ENCODE measurements at regions of chr12 and their contacts with region 1.

Region 1: DNA sequence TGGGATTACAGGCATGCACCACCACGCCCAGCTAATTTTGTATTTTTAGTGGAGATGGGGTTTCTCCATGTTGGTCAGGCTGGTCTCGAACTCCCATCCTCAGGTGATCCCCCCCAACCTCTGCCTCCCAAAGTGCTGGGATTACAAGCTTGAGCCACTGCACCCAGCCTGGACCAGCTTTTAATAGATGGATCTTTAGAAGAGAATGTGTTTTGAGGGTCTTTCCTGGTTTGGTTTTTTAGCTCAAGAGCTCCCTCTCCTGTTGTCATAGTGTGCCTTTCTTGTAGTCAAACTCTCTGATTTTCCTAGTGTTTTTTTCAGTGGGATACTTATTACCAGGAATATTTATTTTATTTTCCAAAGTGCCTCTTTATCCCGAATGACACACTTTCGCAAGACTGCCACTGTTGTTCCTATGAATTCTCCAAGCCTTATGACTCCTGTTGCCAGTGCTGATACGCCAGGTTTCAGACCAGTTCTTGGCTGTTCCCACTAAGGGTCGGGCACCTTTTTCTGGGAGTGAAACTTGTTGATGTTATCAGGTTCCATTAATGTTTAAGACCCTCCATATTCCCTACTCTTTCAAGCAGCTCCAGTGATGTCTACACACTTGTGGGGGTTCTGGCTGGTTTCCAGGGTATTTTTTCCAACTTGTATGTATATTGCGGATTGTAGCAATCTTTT is 31.5 kb upstream of the LIMA1 start:
- DNase-seq: no peak
- ATAC-seq: peak; percentile 63
- H3K4me3 ChIP-seq: no peak overlapping the region
- H3K27ac ChIP-seq: no peak overlapping the region
- H3K4me1 ChIP-seq: peaks cover 17 to 37% of the 10 kb centered on the region in 2 experiments
- H3K27me3 ChIP-seq: no peaks in the 10 kb centered on the region
- CTCF ChIP-seq: peak; percentile 73 to 90 (median 75)
- POLR2A ChIP-seq: no peak
- RAD21 ChIP-seq: peak; percentile 95

Region 2: GRCh38 chr12:50084775-50085614 is 229.8 kb before region 1 on chr12 and contains the start of gene SMARCD1:
- CTCF ChIA-PET with region 1: interaction called, 3 read pairs
- POLR2A ChIA-PET with region 1: interaction called, 3 read pairs
- RAD21 ChIA-PET with region 1: no interaction called
- intact Hi-C with region 1: loop called (anchors 5 kb)
- DNase-seq: peak; percentile 81
- ATAC-seq: peak; percentile 89
- H3K4me3 ChIP-seq: peak within 1 kb of the TSS; percentile 70 to 77
- H3K27ac ChIP-seq: peak within 1 kb of the TSS; percentile 59
- H3K4me1 ChIP-seq: peaks cover 5 to 21% of the 10 kb centered on the region in 2 experiments
- H3K27me3 ChIP-seq: no peaks in the 10 kb centered on the region
- CTCF ChIP-seq: peak; percentile 45 to 60 (median 56); a peak in 4 of 6 replicates
- POLR2A ChIP-seq: peak; percentile 50
- RAD21 ChIP-seq: no peak
- total RNA-seq, gene SMARCD1: 64.8 TPM

Region 3: GRCh38 chr12:50111693-50112455 is 202.9 kb before region 1 on chr12 and contains the start of gene COX14:
- CTCF ChIA-PET with region 1: interaction called, 24 read pairs
- POLR2A ChIA-PET with region 1: no interaction called
- RAD21 ChIA-PET with region 1: interaction called, 3 to 4 read pairs
- intact Hi-C with region 1: loop called (anchors 5 kb)
- DNase-seq: peak; percentile 99
- ATAC-seq: peak; percentile 90
- H3K4me3 ChIP-seq: peak within 1 kb of the TSS; percentile 93 to 99
- H3K27ac ChIP-seq: peak within 1 kb of the TSS; percentile 77
- H3K4me1 ChIP-seq: peaks cover 20 to 22% of the 10 kb centered on the region in 2 experiments
- H3K27me3 ChIP-seq: no peaks in the 10 kb centered on the region
- CTCF ChIP-seq: peak; percentile 83 to 94 (median 91); a peak in 5 of 6 replicates
- POLR2A ChIP-seq: peak; percentile 78
- RAD21 ChIP-seq: peak; percentile 70
- total RNA-seq, gene COX14: 41.0 TPM

Region 4: GRCh38 chr12:50187084-50187900 is 127.5 kb before region 1 on chr12:
- CTCF ChIA-PET with region 1: interaction called, 7 read pairs
- POLR2A ChIA-PET with region 1: no interaction called
- RAD21 ChIA-PET with region 1: interaction called, 3 to 5 read pairs
- intact Hi-C with region 1: loop called (anchors 2 kb)
- DNase-seq: no peak
- ATAC-seq: no peak
- H3K4me3 ChIP-seq: no peak overlapping the region
- H3K27ac ChIP-seq: no peak overlapping the region
- H3K4me1 ChIP-seq: no peaks in the 10 kb centered on the region
- H3K27me3 ChIP-seq: no peaks in the 10 kb centered on the region
- CTCF ChIP-seq: no peak
- POLR2A ChIP-seq: no peak
- RAD21 ChIP-seq: no peak

Region 5: GRCh38 chr12:50201978-50202521 is 112.7 kb before region 1 on chr12:
- CTCF ChIA-PET with region 1: interaction called, 3 read pairs
- POLR2A ChIA-PET with region 1: no interaction called
- RAD21 ChIA-PET with region 1: interaction called, 3 read pairs
- intact Hi-C with region 1: loop called (anchors 5 kb)
- DNase-seq: peak; percentile 81
- ATAC-seq: peak; percentile 97
- H3K4me3 ChIP-seq: peak overlapping the region; percentile 19 to 56; a peak in 3 of 4 replicates
- H3K27ac ChIP-seq: peak overlapping the region; percentile 91
- H3K4me1 ChIP-seq: peaks cover 34 to 49% of the 10 kb centered on the region in 2 experiments
- H3K27me3 ChIP-seq: no peaks in the 10 kb centered on the region
- CTCF ChIP-seq: no peak
- POLR2A ChIP-seq: no peak
- RAD21 ChIP-seq: peak; percentile 23; the same call in 1 of the 2 replicates

Region 6: DNA sequence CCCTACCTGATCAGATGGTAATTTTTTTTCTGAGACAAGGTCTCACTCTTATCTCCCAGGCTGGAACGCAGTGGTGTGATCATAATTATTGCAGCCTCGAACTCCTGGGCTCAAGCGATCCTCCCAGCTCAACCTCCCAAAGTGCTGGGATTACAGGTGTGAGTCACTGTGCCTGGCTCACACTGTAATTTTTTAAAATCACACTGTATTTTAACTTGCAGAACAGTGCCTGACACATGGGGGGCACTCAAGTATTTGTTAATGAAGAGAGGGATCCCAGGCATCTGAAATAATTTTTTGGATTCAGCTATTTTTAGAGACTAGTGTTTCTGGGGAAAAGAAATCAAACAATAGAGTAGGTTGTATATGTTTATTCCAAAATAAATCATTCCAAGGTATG is 53.1 kb before region 1 on chr12:
- CTCF ChIA-PET with region 1: interaction called, 32 read pairs
- POLR2A ChIA-PET with region 1: no interaction called
- RAD21 ChIA-PET with region 1: interaction called, 3 to 5 read pairs
- intact Hi-C with region 1: loop called (anchors 5 kb)
- DNase-seq: no peak
- ATAC-seq: peak; percentile 67
- H3K4me3 ChIP-seq: no peak overlapping the region
- H3K27ac ChIP-seq: peak overlapping the region; percentile 36
- H3K4me1 ChIP-seq: peaks cover 55 to 70% of the 10 kb centered on the region in 2 experiments
- H3K27me3 ChIP-seq: no peaks in the 10 kb centered on the region
- CTCF ChIP-seq: peak; percentile 28 to 55 (median 50); a peak in 4 of 6 replicates
- POLR2A ChIP-seq: no peak
- RAD21 ChIP-seq: peak; percentile 81

Measured in HCT116 (cell line).